ENCODE measurements at regions of chr22 and their contacts with region 1.

Region 1: DNA sequence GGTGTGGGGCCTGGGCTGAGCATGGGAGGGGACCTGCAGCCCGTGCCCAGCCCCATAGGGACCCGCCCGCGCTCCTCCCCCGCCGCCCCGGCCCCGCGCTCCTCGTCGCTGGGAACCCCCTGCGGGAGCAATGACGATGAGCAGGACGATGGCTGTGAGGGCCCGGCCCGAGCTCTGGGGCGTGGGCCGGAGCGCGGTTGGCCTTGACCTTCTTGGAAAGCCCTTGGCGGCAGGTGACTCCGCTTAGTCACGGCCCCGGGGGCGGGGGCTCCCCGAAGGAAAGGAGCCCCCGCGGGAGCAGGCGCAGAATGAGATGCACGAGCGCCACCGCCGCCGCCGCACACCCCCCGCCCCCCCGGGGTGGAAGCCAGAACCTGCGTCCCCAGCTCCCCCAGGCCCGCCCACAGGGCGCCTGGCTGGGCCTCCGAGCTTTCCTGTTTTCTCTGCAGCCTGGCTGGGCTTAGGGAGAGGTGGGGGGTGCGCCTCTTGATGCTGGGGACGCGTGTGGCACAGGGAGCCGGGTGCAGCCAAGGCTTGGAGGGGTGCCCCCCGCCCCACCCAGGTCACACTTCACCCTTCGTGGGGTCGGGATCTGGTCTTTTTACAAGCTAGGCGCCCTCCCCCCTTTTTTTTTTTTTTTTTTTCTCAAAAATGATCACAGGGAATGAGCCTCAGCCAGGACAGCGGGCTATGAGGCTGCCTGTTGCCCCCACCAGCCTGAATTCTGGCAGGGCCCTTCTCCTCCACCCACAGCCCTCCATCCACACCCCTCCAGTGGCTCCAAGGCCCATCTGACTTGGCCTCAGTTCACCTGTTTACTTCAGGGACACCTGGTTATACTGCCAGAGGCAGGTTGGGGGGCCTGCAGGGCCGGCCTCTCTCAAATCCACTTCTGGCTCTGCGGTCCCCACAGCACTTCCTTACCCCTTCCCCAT is 17.9 kb downstream of the CRELD2 start:
- DNase-seq: peak; percentile 97
- H3K4me3 ChIP-seq: peak overlapping the region in 1 of 3 experiments; percentile 13
- H3K27ac ChIP-seq: peak overlapping the region; percentile 85
- H3K4me1 ChIP-seq: peaks cover 56% of the 10 kb centered on the region
- H3K27me3 ChIP-seq: no peaks in the 10 kb centered on the region
- CTCF ChIP-seq: no peak
- POLR2A ChIP-seq: peak; percentile 52

Region 2: GRCh38 chr22:49815641-49816071 is 120.6 kb before region 1 on chr22:
- CTCF ChIA-PET with region 1: no interaction called
- POLR2A ChIA-PET with region 1: no interaction called
- dilution Hi-C with region 1: no loop called
- intact Hi-C with region 1: no loop called
- DNase-seq: no peak
- H3K4me3 ChIP-seq: no peak overlapping the region
- H3K27ac ChIP-seq: no peak overlapping the region
- H3K4me1 ChIP-seq: peaks cover 3% of the 10 kb centered on the region
- H3K27me3 ChIP-seq: no peaks in the 10 kb centered on the region
- CTCF ChIP-seq: no peak
- POLR2A ChIP-seq: no peak

Region 3: DNA sequence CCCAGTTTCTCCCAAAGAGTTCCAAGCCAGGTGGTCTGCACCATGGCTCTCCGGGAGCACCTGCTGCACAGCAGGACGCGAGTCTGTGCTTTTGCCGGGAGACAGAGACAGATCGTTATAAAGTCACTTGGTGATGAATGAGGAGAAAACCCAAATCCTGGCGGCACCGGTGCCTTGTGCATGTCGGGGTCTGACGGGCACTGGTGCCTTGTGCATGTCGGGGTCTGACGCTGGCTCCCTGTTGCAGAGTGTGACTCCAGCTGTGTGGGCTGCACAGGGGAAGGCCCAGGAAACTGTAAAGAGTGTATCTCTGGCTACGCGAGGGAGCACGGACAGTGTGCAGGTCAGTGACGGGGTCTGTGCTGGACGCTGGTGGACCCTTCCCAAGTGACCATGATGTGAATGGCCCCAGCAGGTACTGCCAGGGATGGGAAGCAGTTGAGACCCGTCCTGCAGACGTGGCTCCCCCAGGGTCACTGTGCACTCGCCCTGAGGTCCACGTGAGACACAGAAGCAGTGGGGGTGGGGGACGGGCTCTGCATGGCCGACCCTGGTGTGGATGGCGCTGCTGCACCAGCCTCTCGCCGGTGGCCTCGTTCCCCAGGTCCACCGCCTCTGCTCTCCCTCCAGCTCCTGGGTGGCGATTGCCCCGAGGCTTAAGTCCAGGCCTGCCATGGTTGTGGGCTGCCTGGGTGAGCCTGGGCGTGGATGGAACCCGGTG is 12.0 kb before region 1 on chr22:
- CTCF ChIA-PET with region 1: no interaction called
- POLR2A ChIA-PET with region 1: no interaction called
- dilution Hi-C with region 1: no loop called
- intact Hi-C with region 1: no loop called
- DNase-seq: no peak
- H3K4me3 ChIP-seq: no peak overlapping the region
- H3K27ac ChIP-seq: no peak overlapping the region
- H3K4me1 ChIP-seq: peaks cover 3% of the 10 kb centered on the region
- H3K27me3 ChIP-seq: no peaks in the 10 kb centered on the region
- CTCF ChIP-seq: no peak
- POLR2A ChIP-seq: no peak

Region 4: DNA sequence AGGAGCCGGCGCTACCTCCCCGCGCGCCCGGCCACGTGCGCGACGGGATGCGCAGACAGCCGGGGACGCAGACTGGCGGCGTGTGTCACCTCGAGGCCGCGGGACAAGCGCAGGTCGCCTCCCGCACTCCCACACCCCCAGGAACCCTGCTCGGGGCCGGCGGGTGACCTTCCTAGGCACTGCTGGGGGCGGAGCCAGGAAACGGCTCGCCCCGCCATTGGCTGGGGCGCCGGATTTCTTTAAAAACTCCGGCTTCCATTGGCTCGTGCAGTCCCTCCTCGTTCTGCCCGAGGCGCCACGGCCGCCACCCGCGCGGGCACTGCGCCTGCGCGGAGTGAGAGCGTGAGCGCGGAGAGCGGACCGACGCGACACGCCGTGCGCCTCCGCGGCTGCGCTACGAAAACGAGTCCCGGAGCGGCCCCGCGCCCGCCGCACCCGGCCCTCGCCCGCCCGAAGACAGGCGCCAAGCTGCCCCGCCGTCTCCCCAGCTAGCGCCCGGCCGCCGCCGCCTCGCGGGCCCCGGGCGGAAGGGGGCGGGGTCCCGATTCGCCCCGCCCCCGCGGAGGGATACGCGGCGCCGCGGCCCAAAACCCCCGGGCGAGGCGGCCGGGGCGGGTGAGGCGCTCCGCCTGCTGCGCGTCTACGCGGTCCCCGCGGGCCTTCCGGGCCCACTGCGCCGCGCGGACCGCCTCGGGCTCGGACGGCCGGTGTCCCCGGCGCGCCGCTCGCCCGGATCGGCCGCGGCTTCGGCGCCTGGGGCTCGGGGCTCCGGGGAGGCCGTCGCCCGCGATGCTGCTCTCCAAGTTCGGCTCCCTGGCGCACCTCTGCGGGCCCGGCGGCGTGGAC is 24.1 kb after region 1 on chr22 and contains the start of gene PIM3:
- CTCF ChIA-PET with region 1: interaction called, 32 read pairs
- POLR2A ChIA-PET with region 1: interaction called, 14 read pairs
- dilution Hi-C with region 1: no loop called
- intact Hi-C with region 1: loop called (anchors 1 kb)
- DNase-seq: peak; percentile 97
- H3K4me3 ChIP-seq: peak within 1 kb of the TSS; percentile 52 to 80 (median 59)
- H3K27ac ChIP-seq: peak within 1 kb of the TSS; percentile 80
- H3K4me1 ChIP-seq: peaks cover 25% of the 10 kb centered on the region
- H3K27me3 ChIP-seq: no peaks in the 10 kb centered on the region
- CTCF ChIP-seq: no peak
- POLR2A ChIP-seq: peak; percentile 96
- total RNA-seq, gene PIM3: 185 and 219 TPM in 2 replicates

Measured in endothelial cell of umbilical vein (primary cell).